Calu3 (cell line): ENCODE measurements at regions of chr5 and their contacts with region 1.

Region 1: GRCh38 chr5:86679529-86679928 is 61.8 kb downstream of the COX7C start:
- DNase-seq: peak; percentile 15
- H3K4me3 Mint-ChIP-seq: no peak overlapping the region
- H3K27ac Mint-ChIP-seq: no peak overlapping the region
- H3K4me1 Mint-ChIP-seq: peaks cover 9% of the 10 kb centered on the region
- H3K27me3 Mint-ChIP-seq: no peaks in the 10 kb centered on the region
- CTCF ChIP-seq: peak; percentile 47

Region 2: DNA sequence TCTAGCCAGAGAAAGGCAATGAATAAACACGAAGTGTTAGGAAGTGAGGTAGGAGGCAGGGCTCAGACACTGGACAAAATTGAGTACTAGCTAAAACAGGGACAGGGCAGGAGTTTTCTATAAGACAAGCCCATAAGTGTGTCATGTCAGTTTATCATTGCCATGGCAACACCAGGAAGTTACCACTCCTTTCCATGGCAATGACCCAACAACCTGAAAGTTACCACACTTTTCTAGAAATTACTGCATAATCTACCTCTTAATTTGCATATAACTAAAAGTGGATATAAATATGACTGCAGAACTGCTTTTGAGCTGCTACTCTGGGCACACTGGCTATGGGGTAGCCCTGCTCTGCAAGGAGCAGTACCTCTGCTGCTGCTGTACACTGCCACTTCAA is 504.3 kb before region 1 on chr5:
- CTCF ChIA-PET with region 1: no interaction called
- intact Hi-C with region 1: loop called (anchors 10 kb)
- DNase-seq: peak; percentile 45
- H3K4me3 Mint-ChIP-seq: no peak overlapping the region
- H3K27ac Mint-ChIP-seq: no peak overlapping the region
- H3K4me1 Mint-ChIP-seq: peaks cover 10% of the 10 kb centered on the region
- H3K27me3 Mint-ChIP-seq: no peaks in the 10 kb centered on the region
- CTCF ChIP-seq: no peak

Region 3: GRCh38 chr5:86314951-86315350 is 364.6 kb before region 1 on chr5:
- CTCF ChIA-PET with region 1: no interaction called
- intact Hi-C with region 1: loop called (anchors 5 kb)
- DNase-seq: no peak
- H3K4me3 Mint-ChIP-seq: no peak overlapping the region
- H3K27ac Mint-ChIP-seq: no peak overlapping the region
- H3K4me1 Mint-ChIP-seq: peaks cover 8% of the 10 kb centered on the region
- H3K27me3 Mint-ChIP-seq: no peaks in the 10 kb centered on the region
- CTCF ChIP-seq: no peak

Region 4: GRCh38 chr5:86546577-86546976 is 133.0 kb before region 1 on chr5:
- CTCF ChIA-PET with region 1: no interaction called
- intact Hi-C with region 1: loop called (anchors 5 kb)
- DNase-seq: no peak
- H3K4me3 Mint-ChIP-seq: no peak overlapping the region
- H3K27ac Mint-ChIP-seq: no peak overlapping the region
- H3K4me1 Mint-ChIP-seq: no peaks in the 10 kb centered on the region
- H3K27me3 Mint-ChIP-seq: no peaks in the 10 kb centered on the region
- CTCF ChIP-seq: no peak

Region 5: GRCh38 chr5:86880785-86881492 is 201.4 kb after region 1 on chr5:
- CTCF ChIA-PET with region 1: no interaction called
- intact Hi-C with region 1: loop called (anchors 5 kb)
- DNase-seq: peak; percentile 80
- H3K4me3 Mint-ChIP-seq: no peak overlapping the region
- H3K27ac Mint-ChIP-seq: no peak overlapping the region
- H3K4me1 Mint-ChIP-seq: peaks cover 9% of the 10 kb centered on the region
- H3K27me3 Mint-ChIP-seq: no peaks in the 10 kb centered on the region
- CTCF ChIP-seq: peak; percentile 91